Right ventricle myocardium superior (tissue), 1 donor: ENCODE measurements at regions of chr1 and their contacts with region 1.

Region 1: GRCh38 chr1:91609571-91609970 is 108.9 kb downstream of the CDC7 start:
- DNase-seq: no peak
- ATAC-seq: no peak

Region 2: DNA sequence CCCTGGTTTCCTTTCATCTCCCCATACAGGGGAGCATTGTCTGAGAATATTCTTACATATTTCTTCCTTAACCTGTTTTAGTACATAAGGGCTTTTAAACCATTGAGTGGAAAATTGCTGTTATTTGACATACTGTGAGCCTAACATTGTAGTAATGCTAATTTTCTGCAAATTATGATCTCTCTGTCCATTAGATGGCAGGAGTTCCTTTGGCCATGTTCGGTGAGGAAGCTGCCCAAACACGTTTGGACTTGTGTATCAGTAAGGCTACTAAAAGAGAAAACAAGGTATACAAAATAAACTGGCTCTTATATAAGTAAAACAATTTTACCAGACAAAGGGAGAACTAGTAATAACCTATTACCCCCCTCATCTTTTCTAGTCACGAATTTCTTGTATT is 79.7 kb before region 1 on chr1:
- intact Hi-C with region 1: loop called (anchors 10 kb)
- DNase-seq: no peak
- ATAC-seq: no peak

Region 3: GRCh38 chr1:91582431-91582921 is 27.1 kb before region 1 on chr1:
- intact Hi-C with region 1: no loop called
- DNase-seq: no peak
- ATAC-seq: no peak

Region 4: GRCh38 chr1:91707114-91707889 is 97.7 kb after region 1 on chr1:
- intact Hi-C with region 1: loop called (anchors 5 kb)
- DNase-seq: peak; percentile 68
- ATAC-seq: peak; percentile 88